G401 (cell line): ENCODE measurements at regions of chr4 and their contacts with region 1.

Region 1: GRCh38 chr4:24840821-24841587 is 45.6 kb downstream of the SOD3 start:
- DNase-seq: no peak

Region 2: DNA sequence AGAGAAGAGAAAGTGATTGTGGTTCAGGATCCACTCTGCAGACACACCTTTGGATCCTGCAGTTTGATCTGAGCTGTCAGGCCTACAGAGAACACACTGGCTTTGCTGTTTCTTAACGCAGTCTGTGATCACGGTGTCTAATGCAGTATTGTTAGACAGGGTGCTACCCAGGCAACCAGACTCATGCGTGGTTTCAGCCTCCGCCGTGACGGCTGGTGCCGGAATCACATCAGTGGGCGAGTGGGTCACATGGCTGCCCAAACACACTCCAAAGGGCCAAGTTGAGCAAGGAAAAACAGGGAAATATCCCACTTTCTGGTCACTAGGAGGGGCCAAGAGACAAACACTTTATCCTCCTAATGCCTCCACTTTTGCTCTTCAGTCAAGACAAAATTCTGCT is 44.3 kb after region 1 on chr4:
- in situ Hi-C with region 1: loop called (anchors 5 kb)
- DNase-seq: no peak